GM10248 (cell line): ENCODE measurements at regions of chr6 and their contacts with region 1.

Region 1: GRCh38 chr6:161736781-161737292 is 463.0 kb upstream of the AGPAT4 start:
- DNase-seq: no peak
- CTCF ChIP-seq: no peak

Region 2: DNA sequence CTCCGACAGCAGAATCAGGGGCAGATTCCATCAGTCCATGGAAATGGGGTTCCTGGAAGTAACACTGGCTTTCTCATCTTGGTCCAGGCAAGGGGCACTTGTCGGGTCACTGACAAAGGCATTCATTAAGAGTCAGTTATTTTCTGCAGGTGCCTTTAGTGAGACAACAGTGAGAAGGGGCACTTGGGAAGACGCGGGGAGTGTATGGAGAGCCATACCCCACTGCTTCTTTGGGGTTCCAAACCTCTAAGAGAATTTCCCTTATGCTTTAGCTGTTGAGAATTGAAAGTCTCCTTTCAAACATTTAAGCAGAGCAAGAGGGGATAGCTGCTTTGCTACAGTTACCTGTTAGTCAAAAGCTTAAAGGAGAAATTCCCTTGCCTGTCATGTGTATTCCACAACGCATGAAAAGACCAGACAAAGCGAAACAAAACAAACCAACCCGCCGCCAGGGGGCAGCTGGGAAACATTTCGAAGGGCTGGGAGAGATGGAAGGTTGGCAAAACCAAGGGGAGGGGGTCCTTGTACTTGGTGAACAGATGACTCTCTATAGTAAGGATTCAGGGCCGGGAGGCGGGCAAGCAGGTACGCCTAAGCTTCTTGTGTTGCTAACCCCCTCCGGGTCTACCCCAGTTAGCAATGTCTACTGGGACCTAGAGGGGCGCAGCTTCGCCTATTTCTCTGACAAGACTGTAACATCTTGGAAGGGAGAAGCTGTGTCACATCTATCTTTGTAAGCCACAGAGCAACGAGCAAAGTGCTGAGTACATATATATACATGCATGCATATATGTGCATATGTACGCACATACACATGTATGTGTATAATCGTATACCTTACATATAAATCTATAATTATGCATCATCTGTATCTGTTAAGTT is 11.9 kb after region 1 on chr6:
- CTCF ChIA-PET with region 1: interaction called, 11 read pairs
- POLR2A ChIA-PET with region 1: no interaction called
- DNase-seq: no peak
- CTCF ChIP-seq: peak; percentile 28

Region 3: DNA sequence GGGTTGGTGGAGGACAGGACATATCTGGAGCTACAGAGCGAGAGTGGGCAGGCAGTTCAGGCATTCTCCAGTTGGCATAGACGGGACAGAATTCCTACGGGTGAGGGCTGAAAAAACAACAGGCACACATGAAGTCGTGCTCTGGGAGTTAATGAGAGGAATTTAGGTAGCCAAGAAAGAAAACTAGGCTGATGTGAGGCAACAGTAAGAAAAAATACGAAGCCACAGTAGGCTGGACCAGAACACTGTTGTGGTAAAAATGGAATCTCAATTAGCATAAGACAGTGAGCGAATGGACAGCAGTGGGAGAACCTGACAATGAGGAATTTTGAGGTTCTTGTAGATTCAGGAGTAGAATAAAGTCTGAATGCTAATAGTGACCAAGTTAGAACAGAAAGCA is 25.1 kb after region 1 on chr6:
- CTCF ChIA-PET with region 1: no interaction called
- POLR2A ChIA-PET with region 1: no interaction called
- DNase-seq: no peak
- CTCF ChIP-seq: no peak